Dorsolateral prefrontal cortex (tissue), 120 donors: ENCODE measurements at regions of chr3 and their contacts with region 1.

Region 1: DNA sequence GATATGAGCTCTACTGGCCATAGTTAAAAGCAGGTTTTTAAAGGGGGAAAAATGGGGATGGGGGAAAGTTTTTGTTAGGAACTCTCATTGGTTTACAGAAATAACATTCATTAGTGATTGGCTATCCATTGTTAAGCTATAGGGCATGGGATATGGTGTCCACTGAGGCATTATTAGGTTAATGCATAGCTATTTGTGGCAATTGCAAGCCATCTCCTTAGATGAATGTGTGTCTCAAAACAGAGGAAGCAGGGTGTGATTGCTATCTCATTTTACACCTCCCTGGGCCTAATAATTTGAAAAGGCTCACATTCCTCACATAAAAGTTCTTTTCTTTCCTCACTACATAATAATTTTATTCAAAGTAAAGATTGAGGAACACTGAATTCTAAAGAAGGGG is 396.6 kb downstream of the TAFA4 start:
- DNase-seq: no peak
- H3K4me3 ChIP-seq: no peak overlapping the region
- H3K27ac ChIP-seq: no peak overlapping the region
- H3K27me3 ChIP-seq: no peaks in the 10 kb centered on the region
- CTCF ChIP-seq: no peak

Region 2: GRCh38 chr3:68504201-68504600 is 31.6 kb before region 1 on chr3:
- intact Hi-C with region 1: loop called in 1 of 2 experiments (anchors 2 kb)
- DNase-seq: no peak
- H3K4me3 ChIP-seq: no peak overlapping the region
- H3K27ac ChIP-seq: no peak overlapping the region
- H3K27me3 ChIP-seq: no peaks in the 10 kb centered on the region
- CTCF ChIP-seq: no peak